ENCODE measurements at regions of chr17 and their contacts with region 1.

Region 1: GRCh38 chr17:36714789-36715188 is 113.4 kb downstream of the MRM1 start:
- DNase-seq: no peak
- ATAC-seq: no peak
- H3K4me3 ChIP-seq: no peak overlapping the region
- H3K27ac ChIP-seq: no peak overlapping the region
- H3K4me1 ChIP-seq: no peaks in the 10 kb centered on the region
- H3K27me3 ChIP-seq: 0 out of 2 replicates have a peak, but pooled peaks cover 2% of the 10 kb centered on the region
- CTCF ChIP-seq: no peak

Region 2: GRCh38 chr17:36728030-36728991 is 13.5 kb after region 1 on chr17:
- CTCF ChIA-PET with region 1: no interaction called
- POLR2A ChIA-PET with region 1: no interaction called
- in situ Hi-C with region 1: no loop called
- intact Hi-C with region 1: no loop called
- DNase-seq: no peak
- ATAC-seq: no peak
- H3K4me3 ChIP-seq: no peak overlapping the region
- H3K27ac ChIP-seq: no peak overlapping the region
- H3K4me1 ChIP-seq: no peaks in the 10 kb centered on the region
- H3K27me3 ChIP-seq: no peaks in the 10 kb centered on the region; the same call in 1 of the 2 replicates
- CTCF ChIP-seq: no peak

Region 3: DNA sequence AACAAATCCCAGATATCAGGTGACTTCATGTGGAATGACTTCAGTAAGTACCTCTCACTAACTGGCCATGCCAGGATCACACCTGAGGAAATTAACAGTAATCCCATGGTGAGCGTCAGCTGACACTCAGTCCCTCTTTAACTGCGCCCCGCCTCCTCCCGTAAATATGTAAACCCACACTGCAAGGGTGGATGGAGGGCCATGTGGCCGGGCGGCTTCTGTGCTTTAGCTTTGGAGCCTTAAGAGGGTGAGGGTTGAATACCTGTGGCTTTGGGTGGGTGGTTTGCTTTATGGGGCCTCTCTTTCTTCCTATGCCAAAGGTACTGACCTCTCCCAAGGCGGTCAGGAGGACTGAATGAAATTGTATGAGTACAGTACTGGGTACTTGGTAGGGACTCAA is 28.3 kb after region 1 on chr17:
- CTCF ChIA-PET with region 1: no interaction called
- POLR2A ChIA-PET with region 1: interaction called, 12 read pairs
- in situ Hi-C with region 1: no loop called
- intact Hi-C with region 1: no loop called
- DNase-seq: no peak
- ATAC-seq: no peak
- H3K4me3 ChIP-seq: no peak overlapping the region
- H3K27ac ChIP-seq: no peak overlapping the region
- H3K4me1 ChIP-seq: no peaks in the 10 kb centered on the region
- H3K27me3 ChIP-seq: no peaks in the 10 kb centered on the region; the same call in 1 of the 2 replicates
- CTCF ChIP-seq: no peak

Region 4: GRCh38 chr17:36972186-36972700 is 257.5 kb after region 1 on chr17:
- CTCF ChIA-PET with region 1: no interaction called
- POLR2A ChIA-PET with region 1: no interaction called
- in situ Hi-C with region 1: no loop called
- intact Hi-C with region 1: no loop called
- DNase-seq: no peak
- ATAC-seq: no peak
- H3K4me3 ChIP-seq: no peak overlapping the region
- H3K27ac ChIP-seq: no peak overlapping the region
- H3K4me1 ChIP-seq: peaks cover 12% of the 10 kb centered on the region
- H3K27me3 ChIP-seq: no peaks in the 10 kb centered on the region
- CTCF ChIP-seq: no peak

Region 5: DNA sequence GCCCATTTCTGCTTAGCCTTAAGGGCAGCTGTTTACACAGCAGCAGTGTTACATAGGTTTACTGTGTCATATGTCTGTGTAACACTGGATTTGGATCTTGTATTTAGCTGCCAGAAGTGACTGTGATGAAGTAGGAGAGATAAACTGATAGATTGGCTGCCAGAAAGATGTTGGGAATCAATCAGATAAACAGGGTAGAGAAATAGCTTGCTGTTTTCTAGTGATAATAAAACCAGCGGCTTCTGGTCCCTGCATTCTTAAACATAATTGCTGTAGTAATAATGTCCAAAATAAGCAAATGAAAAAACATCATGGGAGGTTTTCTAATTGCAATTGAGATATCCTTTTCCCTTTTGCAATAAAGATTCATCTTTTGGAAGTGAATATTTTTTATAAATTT is 302.6 kb after region 1 on chr17:
- CTCF ChIA-PET with region 1: no interaction called
- POLR2A ChIA-PET with region 1: interaction called, 10 read pairs
- in situ Hi-C with region 1: no loop called
- intact Hi-C with region 1: no loop called
- DNase-seq: no peak
- ATAC-seq: no peak
- H3K4me3 ChIP-seq: no peak overlapping the region
- H3K27ac ChIP-seq: no peak overlapping the region
- H3K4me1 ChIP-seq: no peaks in the 10 kb centered on the region
- H3K27me3 ChIP-seq: no peaks in the 10 kb centered on the region
- CTCF ChIP-seq: no peak

Measured in Panc1 (cell line).